Mucosa of descending colon (tissue), 3 donors: ENCODE measurements at regions of chr20 and their contacts with region 1.

Region 1: DNA sequence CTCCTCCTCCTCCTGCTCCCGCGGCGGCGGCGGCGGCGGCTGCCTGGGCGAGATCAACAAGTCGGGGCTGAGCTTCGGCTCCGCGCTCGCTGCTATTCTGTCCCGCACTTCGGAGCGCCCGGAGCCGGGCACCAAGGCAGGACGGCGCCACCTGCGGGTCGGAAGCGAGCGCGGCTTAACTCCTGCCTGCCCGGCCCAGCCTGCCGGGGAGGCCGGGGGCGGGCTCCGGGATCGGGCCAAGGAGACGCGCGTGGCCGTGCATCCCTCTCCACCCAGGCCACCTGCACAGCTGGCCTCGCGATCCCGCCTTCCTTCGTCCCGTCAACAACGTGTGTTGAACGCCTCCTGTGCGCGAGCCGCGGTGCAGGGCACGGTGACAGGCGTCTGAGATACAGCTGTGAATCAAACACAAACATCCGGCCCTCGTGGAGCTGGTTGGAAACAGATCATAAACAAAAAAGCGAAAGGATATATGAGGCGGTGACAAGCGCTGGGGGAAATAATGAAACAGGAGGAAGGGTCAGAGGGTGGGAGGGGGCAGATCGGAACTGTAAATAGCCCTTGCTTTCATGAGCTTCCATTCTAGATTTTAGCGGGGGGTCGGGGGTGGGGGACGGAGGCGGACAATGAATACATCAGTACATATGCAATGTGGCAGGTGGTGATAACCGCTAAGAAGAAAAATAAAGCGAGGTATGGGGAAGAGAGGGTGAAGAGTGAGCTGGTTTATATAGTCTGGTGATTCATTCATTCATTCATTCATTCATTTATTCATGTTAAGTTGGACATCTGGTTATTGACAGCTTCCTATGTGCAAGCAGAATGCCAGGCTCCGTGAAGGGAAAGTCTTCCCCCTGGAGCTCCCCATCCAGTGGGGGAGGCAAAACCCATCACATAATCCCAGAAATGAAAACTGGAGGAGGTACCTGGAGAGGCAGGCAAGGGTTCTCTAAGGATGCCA is 2.0 kb upstream of the KCNB1 start:
- DNase-seq: peak; percentile 69 to 82 (median 82)
- ATAC-seq: peak; percentile 92
- H3K4me3 ChIP-seq: no peak overlapping the region
- H3K4me1 ChIP-seq: peaks cover 2% of the 10 kb centered on the region
- CTCF ChIP-seq: peak; percentile 53

Region 2: GRCh38 chr20:49338061-49338460 is 146.4 kb before region 1 on chr20:
- intact Hi-C with region 1: loop called in 1 of 2 experiments (anchors 10 kb)
- DNase-seq: no peak
- ATAC-seq: no peak
- H3K4me3 ChIP-seq: no peak overlapping the region
- H3K4me1 ChIP-seq: no peaks in the 10 kb centered on the region
- CTCF ChIP-seq: no peak

Region 3: DNA sequence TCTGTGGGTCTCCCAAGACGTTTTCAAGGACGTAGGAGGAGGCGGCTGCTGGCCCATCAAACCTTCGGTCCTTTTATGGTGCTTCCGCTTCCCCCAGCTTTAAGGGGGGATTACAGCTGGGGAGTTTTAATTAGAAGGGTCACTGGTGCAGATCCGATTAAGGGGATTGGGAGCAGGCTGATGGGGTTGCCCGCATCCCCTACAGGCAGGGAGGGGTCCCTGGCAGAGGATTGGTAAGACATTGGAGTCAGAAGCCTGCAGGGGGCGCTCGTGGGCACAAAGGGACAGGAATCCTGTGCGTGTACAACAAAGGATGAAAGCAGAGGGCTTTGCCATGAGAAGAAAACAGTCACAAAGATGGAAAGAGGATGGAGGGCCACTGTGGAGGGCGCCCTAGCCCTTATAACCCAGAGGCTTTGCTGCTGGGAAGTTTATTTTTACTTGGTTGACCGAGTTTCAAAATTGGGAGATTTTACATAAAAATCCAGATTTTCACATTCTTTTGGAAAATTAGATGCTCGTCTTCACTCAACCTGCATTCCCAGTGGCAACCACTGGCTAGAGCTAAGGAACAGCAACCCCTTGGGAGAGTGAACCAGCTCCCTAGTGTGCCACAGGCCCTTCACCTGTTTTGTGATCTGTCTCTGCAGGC is 99.9 kb before region 1 on chr20:
- intact Hi-C with region 1: loop called in 1 of 2 experiments (anchors 5 kb)
- DNase-seq: peak; percentile 56 to 81 (median 77)
- ATAC-seq: peak; percentile 71
- H3K4me3 ChIP-seq: no peak overlapping the region
- H3K4me1 ChIP-seq: no peaks in the 10 kb centered on the region
- CTCF ChIP-seq: peak; percentile 64